Prostate gland (tissue), 2 donors: ENCODE measurements at regions of chr14 and their contacts with region 1.

Region 1: GRCh38 chr14:64340560-64341196 is 46.5 kb upstream of the ESR2 start:
- DNase-seq: no peak
- H3K4me3 ChIP-seq: no peak overlapping the region
- H3K27ac ChIP-seq: no peak overlapping the region
- H3K4me1 ChIP-seq: no peaks in the 10 kb centered on the region
- H3K27me3 ChIP-seq: no peaks in the 10 kb centered on the region
- CTCF ChIP-seq: no peak
- POLR2A ChIP-seq: no peak

Region 2: GRCh38 chr14:63454863-63455622 is 885.6 kb before region 1 on chr14:
- intact Hi-C with region 1: no loop called
- DNase-seq: no peak
- H3K4me3 ChIP-seq: no peak overlapping the region
- H3K27ac ChIP-seq: no peak overlapping the region
- H3K4me1 ChIP-seq: no peaks in the 10 kb centered on the region
- H3K27me3 ChIP-seq: no peaks in the 10 kb centered on the region
- CTCF ChIP-seq: no peak
- POLR2A ChIP-seq: no peak

Region 3: GRCh38 chr14:64294672-64295413 is 45.8 kb before region 1 on chr14:
- intact Hi-C with region 1: no loop called
- DNase-seq: peak; percentile 37
- H3K4me3 ChIP-seq: peak overlapping the region; percentile 18 to 28
- H3K27ac ChIP-seq: no peak overlapping the region
- H3K4me1 ChIP-seq: no peaks in the 10 kb centered on the region
- H3K27me3 ChIP-seq: no peaks in the 10 kb centered on the region
- CTCF ChIP-seq: peak; percentile 37 to 75 (median 67)
- POLR2A ChIP-seq: no peak

Region 4: DNA sequence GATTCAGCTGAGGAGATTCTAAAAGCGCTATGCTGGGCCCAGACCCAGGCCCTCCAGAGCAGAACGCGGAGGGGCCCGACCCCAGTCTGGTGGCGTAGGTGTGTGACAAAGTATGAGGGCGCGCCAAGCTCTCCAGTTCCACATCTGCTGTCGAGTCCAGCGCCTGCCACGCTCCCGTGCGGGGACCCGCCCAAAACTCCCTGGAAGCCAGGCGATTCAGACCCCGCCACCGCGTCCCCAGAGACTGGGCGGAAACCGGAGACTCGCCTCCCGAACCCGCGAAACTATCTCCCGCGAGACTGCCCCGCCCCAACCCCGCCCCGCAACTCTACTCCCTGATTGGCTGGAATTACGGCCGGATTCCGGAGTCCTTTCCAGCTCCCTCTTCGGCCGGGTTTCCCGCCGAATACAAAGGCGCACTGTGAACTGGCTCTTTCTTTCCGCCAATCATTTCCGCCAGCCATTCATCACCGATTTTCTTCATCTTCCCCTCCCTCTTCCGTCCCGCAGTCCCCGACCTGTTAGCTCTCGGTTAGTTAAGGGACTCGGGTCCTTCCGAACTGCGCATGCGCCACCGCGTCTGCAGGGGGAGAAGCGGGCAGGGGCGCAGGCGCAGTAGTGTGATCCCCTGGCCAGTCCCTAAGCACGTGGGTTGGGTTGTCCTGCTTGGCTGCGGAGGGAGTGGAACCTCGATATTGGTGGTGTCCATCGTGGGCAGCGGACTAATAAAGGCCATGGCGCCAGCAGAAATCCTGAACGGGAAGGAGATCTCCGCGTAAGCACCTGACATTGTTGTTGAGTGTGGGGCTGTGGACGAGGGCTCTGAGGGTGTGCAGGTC is 47.2 kb after region 1 on chr14 and contains the start of gene MTHFD1:
- intact Hi-C with region 1: loop called (anchors 5 kb)
- DNase-seq: peak; percentile 98
- H3K4me3 ChIP-seq: peak within 1 kb of the TSS; percentile 61 to 67
- H3K27ac ChIP-seq: peak within 1 kb of the TSS; percentile 70 to 83
- H3K4me1 ChIP-seq: no peaks in the 10 kb centered on the region
- H3K27me3 ChIP-seq: no peaks in the 10 kb centered on the region
- CTCF ChIP-seq: peak in 2 of 4 experiments; percentile 30 to 43
- POLR2A ChIP-seq: peak; percentile 21
- total RNA-seq, gene MTHFD1: 26.1 to 34.7 TPM

Region 5: GRCh38 chr14:64434528-64434927 is 93.8 kb after region 1 on chr14:
- intact Hi-C with region 1: no loop called
- DNase-seq: no peak
- H3K4me3 ChIP-seq: no peak overlapping the region
- H3K27ac ChIP-seq: no peak overlapping the region
- H3K4me1 ChIP-seq: peaks cover 4% of the 10 kb centered on the region
- H3K27me3 ChIP-seq: no peaks in the 10 kb centered on the region
- CTCF ChIP-seq: no peak
- POLR2A ChIP-seq: no peak

Region 6: DNA sequence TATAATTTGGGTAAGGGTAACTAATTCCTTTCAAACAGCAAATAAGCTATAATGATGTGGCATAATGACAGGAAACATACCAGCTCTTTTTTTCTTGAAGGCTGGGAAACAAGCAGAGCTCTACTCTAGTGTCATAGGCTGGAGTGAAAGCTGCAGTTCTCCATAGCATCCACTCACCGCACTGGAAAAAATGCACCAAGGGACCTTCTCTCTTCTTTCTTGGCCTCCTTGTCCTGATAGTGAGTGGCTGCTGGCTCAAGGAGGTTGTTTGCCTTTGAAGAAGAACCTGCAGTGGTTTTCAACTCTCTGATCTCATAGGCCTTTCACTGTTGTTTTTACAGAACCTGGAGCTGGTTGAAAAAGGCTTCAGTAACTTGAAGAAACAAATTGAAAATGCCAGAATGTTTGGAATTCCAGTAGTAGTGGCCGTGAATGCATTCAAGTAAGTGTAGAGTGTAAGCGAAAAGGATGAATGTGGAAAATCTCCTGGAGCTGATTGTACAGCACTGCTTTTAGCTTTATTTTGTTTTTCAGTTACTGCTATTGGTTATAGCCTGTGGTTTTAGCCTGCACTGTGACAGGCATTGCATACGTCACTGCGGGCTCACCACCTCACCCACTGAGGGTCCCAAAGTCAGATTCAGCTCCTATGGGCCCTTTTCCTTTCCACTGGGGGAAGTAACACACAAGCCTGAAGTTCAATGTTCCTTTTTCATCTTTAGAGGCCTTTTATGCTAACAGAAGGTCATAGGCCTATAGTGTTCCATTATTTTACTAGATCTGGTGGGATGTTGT is 107.4 kb after region 1 on chr14:
- intact Hi-C with region 1: no loop called
- DNase-seq: no peak
- H3K4me3 ChIP-seq: no peak overlapping the region
- H3K27ac ChIP-seq: no peak overlapping the region
- H3K4me1 ChIP-seq: no peaks in the 10 kb centered on the region
- H3K27me3 ChIP-seq: no peaks in the 10 kb centered on the region
- CTCF ChIP-seq: no peak
- POLR2A ChIP-seq: no peak

Region 7: GRCh38 chr14:64478634-64479250 is 138.1 kb after region 1 on chr14:
- intact Hi-C with region 1: loop called (anchors 10 kb)
- DNase-seq: no peak
- H3K4me3 ChIP-seq: no peak overlapping the region
- H3K27ac ChIP-seq: no peak overlapping the region
- H3K4me1 ChIP-seq: no peaks in the 10 kb centered on the region
- H3K27me3 ChIP-seq: no peaks in the 10 kb centered on the region
- CTCF ChIP-seq: peak in 3 of 4 experiments; percentile 29 to 46 (median 45)
- POLR2A ChIP-seq: no peak

Region 8: GRCh38 chr14:64510825-64511671 is 170.4 kb after region 1 on chr14:
- intact Hi-C with region 1: loop called (anchors 10 kb)
- DNase-seq: peak; percentile 74
- H3K4me3 ChIP-seq: no peak overlapping the region
- H3K27ac ChIP-seq: peak overlapping the region; percentile 81 to 98
- H3K4me1 ChIP-seq: peaks cover 31% of the 10 kb centered on the region
- H3K27me3 ChIP-seq: no peaks in the 10 kb centered on the region
- CTCF ChIP-seq: peak; percentile 60 to 87 (median 85)
- POLR2A ChIP-seq: no peak

Region 9: GRCh38 chr14:64636208-64636979 is 295.7 kb after region 1 on chr14:
- intact Hi-C with region 1: loop called (anchors 10 kb)
- DNase-seq: peak; percentile 57
- H3K4me3 ChIP-seq: no peak overlapping the region
- H3K27ac ChIP-seq: no peak overlapping the region
- H3K4me1 ChIP-seq: no peaks in the 10 kb centered on the region
- H3K27me3 ChIP-seq: no peaks in the 10 kb centered on the region
- CTCF ChIP-seq: peak; percentile 78 to 89 (median 87)
- POLR2A ChIP-seq: no peak